Heart left ventricle (tissue), 16 donors: ENCODE measurements at regions of chr12 and their contacts with region 1.

Region 1: DNA sequence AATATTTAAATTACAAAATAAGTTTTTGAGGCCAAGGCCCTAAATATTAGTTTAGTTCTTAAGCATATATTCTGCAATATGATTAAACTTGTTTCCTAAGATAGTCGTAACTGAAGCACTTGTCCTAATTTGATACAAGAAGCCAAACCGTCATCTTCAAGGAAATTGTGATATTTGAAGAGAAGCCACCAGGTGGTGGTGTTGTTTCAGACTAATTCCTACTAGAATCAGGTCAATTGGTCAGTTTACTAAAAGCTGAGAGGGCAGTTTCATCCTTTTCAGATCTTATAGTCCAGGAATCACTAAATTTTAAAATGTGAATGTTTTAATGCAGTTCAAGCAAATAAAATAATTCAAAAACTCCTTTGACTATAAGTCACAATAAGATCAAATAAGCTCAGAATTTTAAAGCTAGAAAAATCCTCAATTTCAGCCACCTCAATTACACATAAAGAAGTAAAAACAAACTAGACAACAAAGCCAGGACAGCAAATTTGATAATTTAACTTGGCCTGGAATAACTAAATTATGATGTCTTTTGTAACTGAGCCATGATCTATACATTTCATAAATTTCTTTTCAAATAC is 7.1 kb upstream of the ARL1 start:
- DNase-seq: peak in 1 of 5 donors; percentile 14
- ATAC-seq: no peak
- H3K4me3 ChIP-seq: no peak overlapping the region
- H3K27ac ChIP-seq: no peak overlapping the region
- H3K4me1 ChIP-seq: no peaks in the 10 kb centered on the region
- H3K27me3 ChIP-seq: no peaks in the 10 kb centered on the region
- CTCF ChIP-seq: peak; percentile 33 to 64 (median 51)
- POLR2A ChIP-seq: no peak

Region 2: GRCh38 chr12:101839324-101840283 is 425.0 kb after region 1 on chr12:
- intact Hi-C with region 1: loop called in 9 of 10 experiments (anchors 5 to 10 kb)
- DNase-seq: peak in 4 of 5 donors; percentile 35 to 63 (median 58)
- ATAC-seq: peak; percentile 36 to 71 (median 64)
- H3K4me3 ChIP-seq: no peak overlapping the region
- H3K27ac ChIP-seq: no peak overlapping the region
- H3K4me1 ChIP-seq: peaks cover 0 to 14% (median 0%) of the 10 kb centered on the region in 12 donors
- H3K27me3 ChIP-seq: no peaks in the 10 kb centered on the region
- CTCF ChIP-seq: peak; percentile 80 to 93 (median 85)
- POLR2A ChIP-seq: no peak